CD14-positive monocyte (primary cell): ENCODE measurements at regions of chr20 and their contacts with region 1.

Region 1: GRCh38 chr20:63864847-63865640 is at the start of gene TPD52L2:
- DNase-seq: peak; percentile 98 to 99 (median 99)
- H3K4me3 ChIP-seq: peak within 1 kb of the TSS; percentile 63 to 97 (median 77)
- H3K4me3 Mint-ChIP-seq: peak within 1 kb of the TSS; percentile 92 to 96
- H3K27ac ChIP-seq: peak within 1 kb of the TSS; percentile 99
- H3K27ac Mint-ChIP-seq: peak within 1 kb of the TSS; percentile 97 to 99 (median 98)
- H3K4me1 ChIP-seq: peaks cover 58 to 77% of the 10 kb centered on the region in 2 donors
- H3K4me1 Mint-ChIP-seq: peaks cover 50% of the 10 kb centered on the region
- H3K27me3 ChIP-seq: no peaks in the 10 kb centered on the region
- H3K27me3 Mint-ChIP-seq: peaks cover 0 to 2% (median 0%) of the 10 kb centered on the region in 3 donors
- CTCF ChIP-seq: no peak
- polyA plus RNA-seq, gene TPD52L2: 137 to 167 (median 144) TPM

Region 2: DNA sequence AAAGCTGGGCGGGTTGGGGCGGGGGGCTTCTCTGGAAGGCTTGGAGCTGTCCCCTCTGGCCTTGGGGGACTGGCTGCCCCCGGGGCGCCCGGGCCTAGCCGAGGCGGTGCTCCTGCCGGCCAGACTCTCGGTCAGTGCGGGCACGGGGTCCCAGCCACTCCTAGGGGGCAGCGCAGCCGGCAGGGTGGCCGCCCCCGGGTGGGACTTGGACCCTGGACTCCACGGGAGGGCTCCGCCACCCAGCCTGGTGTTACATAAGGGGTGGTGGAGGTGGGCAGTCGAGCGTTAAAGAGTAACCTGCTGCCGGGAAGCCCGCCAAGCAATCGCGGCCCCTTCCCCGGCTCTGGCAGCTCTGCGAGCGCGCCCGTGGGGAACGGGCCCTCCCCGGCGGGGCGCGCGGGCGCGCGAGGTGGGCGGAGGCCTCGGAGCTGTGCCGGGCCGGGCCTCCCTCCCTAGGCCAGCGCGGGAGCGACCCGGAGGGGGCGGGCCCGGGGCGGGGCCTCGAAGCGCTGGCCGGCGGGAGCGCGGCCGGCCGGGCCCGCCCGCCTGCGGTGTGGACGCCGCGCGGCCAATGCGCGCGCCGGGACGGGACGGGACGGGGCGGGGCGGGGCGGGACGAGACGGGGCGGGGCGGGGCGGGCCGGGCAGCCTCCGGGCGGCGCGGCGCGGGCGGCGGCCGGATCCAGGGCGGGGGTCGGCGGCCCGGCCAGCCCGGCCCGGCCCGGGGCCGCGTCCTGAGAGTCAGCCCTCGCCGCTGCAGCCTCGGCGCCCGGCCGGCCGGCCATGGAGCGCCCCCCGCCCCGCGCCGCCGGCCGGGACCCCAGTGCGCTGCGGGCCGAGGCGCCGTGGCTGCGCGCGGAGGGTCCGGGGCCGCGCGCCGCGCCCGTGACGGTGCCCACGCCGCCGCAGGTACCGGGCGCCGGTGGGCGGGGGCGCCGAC is 125.6 kb before region 1 on chr20 and contains the start of gene SLC2A4RG:
- intact Hi-C with region 1: loop called in 1 of 2 experiments (anchors 5 kb)
- DNase-seq: peak; percentile 62 to 71 (median 71)
- H3K4me3 ChIP-seq: peak within 1 kb of the TSS; percentile 58 to 83 (median 59)
- H3K4me3 Mint-ChIP-seq: peak within 1 kb of the TSS; percentile 62 to 71
- H3K27ac ChIP-seq: peak within 1 kb of the TSS; percentile 26 to 36
- H3K27ac Mint-ChIP-seq: peak within 1 kb of the TSS in 1 of 7 donors; percentile 36
- H3K4me1 ChIP-seq: peaks cover 35 to 47% of the 10 kb centered on the region in 2 donors
- H3K4me1 Mint-ChIP-seq: peaks cover 21% of the 10 kb centered on the region
- H3K27me3 ChIP-seq: peaks cover 8 to 26% of the 10 kb centered on the region in 2 donors
- H3K27me3 Mint-ChIP-seq: peaks cover 17 to 37% (median 25%) of the 10 kb centered on the region in 3 donors
- CTCF ChIP-seq: no peak
- polyA plus RNA-seq, gene SLC2A4RG: 0.46 to 21.0 (median 1.5) TPM

Region 3: GRCh38 chr20:63785691-63786131 is 79.3 kb before region 1 on chr20:
- intact Hi-C with region 1: loop called in 1 of 2 experiments (anchors 2 kb)
- DNase-seq: no peak
- H3K4me3 ChIP-seq: no peak overlapping the region
- H3K4me3 Mint-ChIP-seq: no peak overlapping the region
- H3K27ac ChIP-seq: no peak overlapping the region
- H3K27ac Mint-ChIP-seq: peak overlapping the region in 1 of 7 donors; percentile 68
- H3K4me1 ChIP-seq: peaks cover 0 to 6% of the 10 kb centered on the region in 2 donors
- H3K4me1 Mint-ChIP-seq: peaks cover 2% of the 10 kb centered on the region
- H3K27me3 ChIP-seq: no peaks in the 10 kb centered on the region
- H3K27me3 Mint-ChIP-seq: peaks cover 0 to 6% (median 2%) of the 10 kb centered on the region in 3 donors
- CTCF ChIP-seq: no peak

Region 4: GRCh38 chr20:63791497-63792156 is 73.4 kb before region 1 on chr20:
- intact Hi-C with region 1: loop called in 1 of 2 experiments (anchors 2 kb)
- DNase-seq: no peak
- H3K4me3 ChIP-seq: no peak overlapping the region
- H3K4me3 Mint-ChIP-seq: no peak overlapping the region
- H3K27ac ChIP-seq: no peak overlapping the region
- H3K27ac Mint-ChIP-seq: no peak overlapping the region
- H3K4me1 ChIP-seq: peaks cover 0 to 1% of the 10 kb centered on the region in 2 donors
- H3K4me1 Mint-ChIP-seq: no peaks in the 10 kb centered on the region
- H3K27me3 ChIP-seq: no peaks in the 10 kb centered on the region
- H3K27me3 Mint-ChIP-seq: peaks cover 4 to 12% (median 11%) of the 10 kb centered on the region in 3 donors
- CTCF ChIP-seq: no peak

Region 5: GRCh38 chr20:63829932-63830835 is 34.9 kb before region 1 on chr20:
- intact Hi-C with region 1: loop called in 1 of 2 experiments (anchors 5 kb)
- DNase-seq: no peak
- H3K4me3 ChIP-seq: peak overlapping the region; percentile 32 to 76 (median 58)
- H3K4me3 Mint-ChIP-seq: peak overlapping the region; percentile 91 to 96
- H3K27ac ChIP-seq: no peak overlapping the region
- H3K27ac Mint-ChIP-seq: peak overlapping the region in 3 of 7 donors; percentile 27 to 75 (median 30)
- H3K4me1 ChIP-seq: peaks cover 9 to 21% of the 10 kb centered on the region in 2 donors
- H3K4me1 Mint-ChIP-seq: peaks cover 9% of the 10 kb centered on the region
- H3K27me3 ChIP-seq: peaks cover 28 to 62% of the 10 kb centered on the region in 2 donors
- H3K27me3 Mint-ChIP-seq: peaks cover 58 to 72% (median 72%) of the 10 kb centered on the region in 3 donors
- CTCF ChIP-seq: no peak

Region 6: GRCh38 chr20:63894358-63895201 is 29.5 kb after region 1 on chr20 and contains the start of gene DNAJC5:
- intact Hi-C with region 1: loop called in 1 of 2 experiments (anchors 1 kb)
- DNase-seq: peak; percentile 95 to 96 (median 95)
- H3K4me3 ChIP-seq: peak within 1 kb of the TSS; percentile 80 to 96 (median 80)
- H3K4me3 Mint-ChIP-seq: peak within 1 kb of the TSS; percentile 92 to 95
- H3K27ac ChIP-seq: peak within 1 kb of the TSS; percentile 90 to 93
- H3K27ac Mint-ChIP-seq: peak within 1 kb of the TSS; percentile 96 to 99 (median 98)
- H3K4me1 ChIP-seq: peaks cover 52 to 60% of the 10 kb centered on the region in 2 donors
- H3K4me1 Mint-ChIP-seq: peaks cover 55% of the 10 kb centered on the region
- H3K27me3 ChIP-seq: no peaks in the 10 kb centered on the region
- H3K27me3 Mint-ChIP-seq: no peaks in the 10 kb centered on the region
- CTCF ChIP-seq: no peak
- polyA plus RNA-seq, gene DNAJC5: 5.9 to 44.4 (median 7.4) TPM

Region 7: DNA sequence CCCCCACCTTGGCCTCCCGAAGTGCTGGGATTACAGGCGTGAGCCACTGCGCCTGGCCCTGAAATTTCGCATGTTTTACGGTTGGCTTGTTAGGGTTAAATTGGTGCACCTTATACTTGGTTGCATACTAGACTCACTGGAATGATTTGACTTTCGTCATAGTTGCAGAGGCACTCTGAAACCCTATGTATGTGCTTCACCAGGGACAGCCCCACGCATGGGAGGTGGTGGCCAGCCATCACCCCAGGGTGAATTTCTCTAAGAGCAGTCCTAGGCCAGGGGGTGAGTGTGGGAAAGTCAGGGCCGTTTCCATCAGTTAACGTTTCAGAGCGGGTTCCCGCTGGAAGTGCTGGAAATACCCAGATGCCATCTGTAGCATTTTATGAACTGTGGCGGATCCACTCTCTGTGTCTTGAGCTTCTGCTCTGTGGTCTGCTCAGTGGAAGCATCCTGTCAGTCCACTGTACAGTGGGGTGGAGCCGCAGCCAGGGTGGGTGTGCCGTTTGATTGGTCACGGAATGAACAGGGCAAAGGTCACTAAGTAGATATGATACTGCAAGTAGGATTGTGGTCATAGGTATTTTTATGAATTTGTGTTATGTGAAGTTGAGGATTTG is 43.1 kb after region 1 on chr20:
- intact Hi-C with region 1: loop called in 1 of 2 experiments (anchors 5 kb)
- DNase-seq: no peak
- H3K4me3 ChIP-seq: no peak overlapping the region
- H3K4me3 Mint-ChIP-seq: no peak overlapping the region
- H3K27ac ChIP-seq: peak overlapping the region; percentile 20 to 71
- H3K27ac Mint-ChIP-seq: peak overlapping the region; percentile 13 to 78 (median 59)
- H3K4me1 ChIP-seq: peaks cover 50 to 63% of the 10 kb centered on the region in 2 donors
- H3K4me1 Mint-ChIP-seq: peaks cover 74% of the 10 kb centered on the region
- H3K27me3 ChIP-seq: no peaks in the 10 kb centered on the region
- H3K27me3 Mint-ChIP-seq: no peaks in the 10 kb centered on the region
- CTCF ChIP-seq: no peak